Posterior cingulate gyrus (tissue), 11 donors: ENCODE measurements at regions of chr3 and their contacts with region 1.

Region 1: GRCh38 chr3:179562591-179563270 is at the start of gene ACTL6A:
- DNase-seq: peak; percentile 98 to 100 (median 99)

Region 2: GRCh38 chr3:179322286-179323196 is 240.2 kb before region 1 on chr3 and contains the start of gene ZNF639:
- intact Hi-C with region 1: loop called (anchors 2 kb)
- DNase-seq: peak; percentile 52 to 96 (median 71)

Region 3: DNA sequence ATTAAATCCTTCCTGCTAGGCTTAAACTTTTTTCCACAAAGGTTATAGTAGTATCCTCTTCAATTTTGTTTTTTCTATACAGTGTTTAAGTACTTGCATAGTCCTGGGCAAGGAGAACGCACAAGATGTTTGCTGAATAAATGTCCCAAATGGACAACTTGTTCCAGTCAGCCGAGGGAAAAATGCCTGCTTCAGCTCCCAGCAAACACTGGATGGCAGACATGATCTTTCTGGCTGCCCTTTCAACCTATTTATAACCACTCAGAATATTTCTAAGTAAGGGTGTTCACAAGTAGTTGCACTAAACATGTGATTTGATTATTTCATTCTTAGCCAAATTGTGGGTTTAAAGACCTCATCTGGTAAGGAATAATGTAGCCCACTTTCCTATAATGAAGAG is 141.2 kb before region 1 on chr3:
- intact Hi-C with region 1: loop called (anchors 1 kb)
- DNase-seq: peak in 1 of 10 donors; percentile 37